Activated T-helper 2 cell treated with anti-CD3 and anti-CD28 coated beads, Interferon-gamma antibody, Interleukin-2, Interleukin-4, amounts not matched to agents 10 μg/mL and 5 μg/mL and 100 μg/mL, durations not matched to agents 14 hours and 24 hours and 36 hours (primary cell): ENCODE measurements at regions of chr9 and their contacts with region 1.

Region 1: GRCh38 chr9:25964239-25964638 is 286.0 kb upstream of the TUSC1 start:
- DNase-seq: no peak
- H3K4me3 Mint-ChIP-seq: no peak overlapping the region
- H3K27ac Mint-ChIP-seq: no peak overlapping the region
- H3K4me1 Mint-ChIP-seq: no peaks in the 10 kb centered on the region
- H3K27me3 Mint-ChIP-seq: no peaks in the 10 kb centered on the region

Region 2: GRCh38 chr9:25936031-25936430 is 28.2 kb before region 1 on chr9:
- intact Hi-C with region 1: no loop called
- DNase-seq: no peak
- H3K4me3 Mint-ChIP-seq: no peak overlapping the region
- H3K27ac Mint-ChIP-seq: no peak overlapping the region
- H3K4me1 Mint-ChIP-seq: no peaks in the 10 kb centered on the region
- H3K27me3 Mint-ChIP-seq: no peaks in the 10 kb centered on the region

Region 3: DNA sequence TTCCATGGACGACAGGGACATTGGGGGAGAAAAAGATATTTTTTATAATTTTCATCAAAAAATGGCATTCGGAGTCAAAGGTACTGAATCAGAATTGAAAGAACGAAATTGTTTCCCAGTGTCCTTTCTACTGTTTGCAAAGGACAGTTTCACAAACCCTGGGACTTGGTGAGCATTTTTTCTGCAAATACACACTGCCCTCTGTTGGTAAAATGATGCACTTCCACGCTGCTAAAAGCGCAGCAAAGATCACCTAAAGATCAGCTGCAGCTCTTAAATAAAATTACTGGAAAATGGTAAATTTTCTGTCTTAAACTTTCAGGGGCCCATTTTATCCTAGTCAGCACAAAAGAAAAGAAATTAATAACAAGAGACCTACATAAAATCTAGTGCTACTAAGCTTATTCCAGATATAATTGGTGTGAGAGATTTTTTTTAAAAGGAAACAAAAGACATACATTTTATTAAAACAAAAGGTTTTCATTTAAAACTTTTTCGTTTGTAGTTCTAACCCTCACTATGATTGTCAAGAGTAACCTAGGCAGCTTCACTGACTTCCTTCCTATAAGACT is 362.3 kb after region 1 on chr9:
- intact Hi-C with region 1: loop called (anchors 5 kb)
- DNase-seq: no peak
- H3K4me3 Mint-ChIP-seq: no peak overlapping the region
- H3K27ac Mint-ChIP-seq: no peak overlapping the region
- H3K4me1 Mint-ChIP-seq: no peaks in the 10 kb centered on the region
- H3K27me3 Mint-ChIP-seq: no peaks in the 10 kb centered on the region

Region 4: DNA sequence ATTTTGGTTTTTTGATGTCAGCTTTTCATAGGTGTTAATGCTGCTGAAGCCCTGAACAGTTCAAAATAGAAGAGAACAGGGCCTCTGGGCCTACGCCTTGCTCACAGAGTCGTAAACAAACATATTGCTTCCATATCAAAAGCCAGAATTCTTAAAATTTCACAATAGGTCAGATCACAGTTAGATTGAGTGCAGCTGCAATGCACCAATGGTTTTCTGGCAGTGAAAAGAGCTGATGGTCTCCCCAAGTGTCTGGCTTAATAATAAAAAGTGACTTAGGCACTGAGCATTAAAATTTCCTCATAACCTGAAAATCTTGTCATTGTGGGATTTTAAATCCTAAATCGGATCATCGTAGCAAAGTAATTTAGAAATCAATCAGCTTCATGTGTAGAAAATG is 435.3 kb after region 1 on chr9:
- intact Hi-C with region 1: no loop called
- DNase-seq: no peak
- H3K4me3 Mint-ChIP-seq: no peak overlapping the region
- H3K27ac Mint-ChIP-seq: no peak overlapping the region
- H3K4me1 Mint-ChIP-seq: no peaks in the 10 kb centered on the region
- H3K27me3 Mint-ChIP-seq: no peaks in the 10 kb centered on the region